ENCODE measurements at regions of chr5 and their contacts with region 1.

Region 1: GRCh38 chr5:142881076-142881783 is 111.1 kb downstream of the ARHGAP26 start:
- DNase-seq: no peak
- H3K4me3 ChIP-seq: no peak overlapping the region
- H3K27ac ChIP-seq: no peak overlapping the region
- H3K4me1 ChIP-seq: peaks cover 32 to 37% (median 34%) of the 10 kb centered on the region in 4 donors
- H3K27me3 ChIP-seq: no peaks in the 10 kb centered on the region
- CTCF ChIP-seq: no peak
- EP300 ChIP-seq: no peak
- POLR2A ChIP-seq: no peak

Region 2: GRCh38 chr5:142716963-142717362 is 164.3 kb before region 1 on chr5:
- intact Hi-C with region 1: loop called (anchors 1 kb)
- DNase-seq: no peak
- H3K4me3 ChIP-seq: no peak overlapping the region
- H3K27ac ChIP-seq: peak overlapping the region in 2 of 4 donors; percentile 56 to 60
- H3K4me1 ChIP-seq: peaks cover 18 to 34% (median 27%) of the 10 kb centered on the region in 4 donors
- H3K27me3 ChIP-seq: peaks cover 0 to 3% (median 0%) of the 10 kb centered on the region in 4 donors
- CTCF ChIP-seq: peak in 2 of 3 experiments; percentile 46 to 54
- EP300 ChIP-seq: no peak
- POLR2A ChIP-seq: no peak

Region 3: GRCh38 chr5:143033535-143034250 is 152.5 kb after region 1 on chr5:
- intact Hi-C with region 1: no loop called
- DNase-seq: no peak
- H3K4me3 ChIP-seq: no peak overlapping the region
- H3K27ac ChIP-seq: no peak overlapping the region
- H3K4me1 ChIP-seq: peaks cover 0 to 11% (median 2%) of the 10 kb centered on the region in 4 donors
- H3K27me3 ChIP-seq: no peaks in the 10 kb centered on the region
- CTCF ChIP-seq: no peak
- EP300 ChIP-seq: peak; percentile 0
- POLR2A ChIP-seq: no peak

Region 4: GRCh38 chr5:143051244-143052058 is 170.2 kb after region 1 on chr5:
- intact Hi-C with region 1: no loop called
- DNase-seq: no peak
- H3K4me3 ChIP-seq: peak overlapping the region in 1 of 4 donors; percentile 2
- H3K27ac ChIP-seq: peak overlapping the region; percentile 65 to 75 (median 73)
- H3K4me1 ChIP-seq: peaks cover 37 to 53% (median 48%) of the 10 kb centered on the region in 4 donors
- H3K27me3 ChIP-seq: no peaks in the 10 kb centered on the region
- CTCF ChIP-seq: no peak
- EP300 ChIP-seq: no peak
- POLR2A ChIP-seq: no peak

Region 5: DNA sequence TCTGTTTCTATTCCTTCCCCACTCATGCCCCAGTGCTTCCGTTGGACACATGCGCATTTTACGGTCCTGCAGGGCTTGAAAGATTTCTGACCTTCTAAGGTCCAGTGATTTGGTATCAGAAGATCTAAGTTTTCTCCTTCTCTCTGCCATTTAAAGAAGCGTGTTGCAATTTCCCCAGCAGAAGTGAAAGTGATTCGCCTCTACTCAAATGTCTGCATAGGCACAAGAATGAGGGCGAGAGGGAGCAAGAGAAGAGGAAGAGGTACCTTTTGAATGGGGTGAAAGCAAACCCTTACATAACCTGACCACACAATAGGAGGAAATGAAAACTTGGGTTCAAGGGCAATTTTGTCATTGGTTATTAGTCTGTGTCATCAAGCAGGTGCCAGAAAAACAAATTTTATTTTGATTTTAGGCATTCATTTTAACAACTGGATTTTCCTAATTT is 554.0 kb after region 1 on chr5:
- intact Hi-C with region 1: no loop called
- DNase-seq: no peak
- H3K4me3 ChIP-seq: peak overlapping the region in 2 of 4 donors; percentile 24 to 25
- H3K27ac ChIP-seq: peak overlapping the region in 1 of 4 donors; percentile 33
- H3K4me1 ChIP-seq: peaks cover 0 to 10% (median 9%) of the 10 kb centered on the region in 4 donors
- H3K27me3 ChIP-seq: no peaks in the 10 kb centered on the region
- CTCF ChIP-seq: no peak
- EP300 ChIP-seq: no peak
- POLR2A ChIP-seq: no peak

Measured in esophagus muscularis mucosa (tissue), 4 donors.